Tibial artery (tissue), 4 donors: ENCODE measurements at regions of chr19 and their contacts with region 1.

Region 1: GRCh38 chr19:35628565-35629331 is at the start of gene RBM42:
- DNase-seq: peak; percentile 98
- H3K4me3 ChIP-seq: peak within 1 kb of the TSS; percentile 93 to 100
- H3K27ac ChIP-seq: peak within 1 kb of the TSS; percentile 89 to 91
- H3K4me1 ChIP-seq: peaks cover 3 to 26% (median 18%) of the 10 kb centered on the region in 4 donors
- H3K27me3 ChIP-seq: no peaks in the 10 kb centered on the region
- CTCF ChIP-seq: peak in 1 of 2 experiments; percentile 22

Region 2: GRCh38 chr19:35545001-35545911 is 83.5 kb before region 1 on chr19 and contains the start of gene TMEM147:
- intact Hi-C with region 1: loop called (anchors 5 kb)
- DNase-seq: peak; percentile 92 to 96
- H3K4me3 ChIP-seq: peak within 1 kb of the TSS; percentile 79
- H3K27ac ChIP-seq: peak within 1 kb of the TSS; percentile 87 to 89
- H3K4me1 ChIP-seq: peaks cover 7 to 32% (median 20%) of the 10 kb centered on the region in 4 donors
- H3K27me3 ChIP-seq: no peaks in the 10 kb centered on the region
- CTCF ChIP-seq: no peak

Region 3: GRCh38 chr19:35557539-35558399 is 71.0 kb before region 1 on chr19:
- intact Hi-C with region 1: no loop called
- DNase-seq: no peak
- H3K4me3 ChIP-seq: peak overlapping the region in 1 of 2 donors; percentile 31
- H3K27ac ChIP-seq: no peak overlapping the region
- H3K4me1 ChIP-seq: peaks cover 0 to 12% (median 9%) of the 10 kb centered on the region in 4 donors
- H3K27me3 ChIP-seq: peaks cover 0 to 54% of the 10 kb centered on the region in 2 donors
- CTCF ChIP-seq: no peak

Region 4: GRCh38 chr19:35612559-35613321 is 16.0 kb before region 1 on chr19 and contains the start of gene HAUS5:
- intact Hi-C with region 1: loop called (anchors 2 kb)
- DNase-seq: peak; percentile 95
- H3K4me3 ChIP-seq: peak within 1 kb of the TSS; percentile 68 to 93
- H3K27ac ChIP-seq: peak within 1 kb of the TSS; percentile 76
- H3K4me1 ChIP-seq: peaks cover 0 to 16% (median 11%) of the 10 kb centered on the region in 4 donors
- H3K27me3 ChIP-seq: no peaks in the 10 kb centered on the region
- CTCF ChIP-seq: peak in 1 of 2 experiments; percentile 25

Region 5: DNA sequence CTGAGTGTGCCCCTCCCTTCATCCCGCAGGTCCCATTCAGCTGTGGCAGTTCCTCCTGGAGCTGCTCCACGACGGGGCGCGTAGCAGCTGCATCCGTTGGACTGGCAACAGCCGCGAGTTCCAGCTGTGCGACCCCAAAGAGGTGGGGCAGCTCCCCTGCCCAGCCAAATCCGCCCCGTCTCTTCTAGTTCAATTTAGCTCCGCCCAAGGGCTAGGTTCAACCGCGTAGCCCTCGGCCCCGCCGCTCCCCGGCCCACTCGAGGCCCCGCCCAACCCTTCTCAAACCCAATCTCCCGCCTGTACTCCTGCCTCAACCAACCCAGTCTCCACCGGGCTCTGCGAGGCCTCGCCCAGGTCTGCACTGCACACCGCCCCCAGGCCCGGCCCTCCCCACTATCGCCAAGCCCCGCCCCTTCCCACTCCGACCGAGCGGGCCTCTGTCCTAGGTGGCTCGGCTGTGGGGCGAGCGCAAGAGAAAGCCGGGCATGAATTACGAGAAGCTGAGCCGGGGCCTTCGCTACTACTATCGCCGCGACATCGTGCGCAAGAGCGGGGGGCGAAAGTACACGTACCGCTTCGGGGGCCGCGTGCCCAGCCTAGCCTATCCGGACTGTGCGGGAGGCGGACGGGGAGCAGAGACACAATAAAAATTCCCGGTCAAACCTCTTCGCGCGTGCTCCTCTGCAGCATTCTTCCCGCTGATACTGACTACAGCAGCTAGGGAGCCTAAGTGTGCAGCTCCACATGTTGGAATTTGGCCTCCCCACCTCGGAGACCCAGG is 15.6 kb after region 1 on chr19:
- intact Hi-C with region 1: loop called (anchors 2 kb)
- DNase-seq: peak; percentile 96 to 98
- H3K4me3 ChIP-seq: peak overlapping the region; percentile 59 to 73
- H3K27ac ChIP-seq: peak overlapping the region; percentile 72 to 93
- H3K4me1 ChIP-seq: peaks cover 4 to 43% (median 32%) of the 10 kb centered on the region in 4 donors
- H3K27me3 ChIP-seq: no peaks in the 10 kb centered on the region
- CTCF ChIP-seq: no peak

Region 6: DNA sequence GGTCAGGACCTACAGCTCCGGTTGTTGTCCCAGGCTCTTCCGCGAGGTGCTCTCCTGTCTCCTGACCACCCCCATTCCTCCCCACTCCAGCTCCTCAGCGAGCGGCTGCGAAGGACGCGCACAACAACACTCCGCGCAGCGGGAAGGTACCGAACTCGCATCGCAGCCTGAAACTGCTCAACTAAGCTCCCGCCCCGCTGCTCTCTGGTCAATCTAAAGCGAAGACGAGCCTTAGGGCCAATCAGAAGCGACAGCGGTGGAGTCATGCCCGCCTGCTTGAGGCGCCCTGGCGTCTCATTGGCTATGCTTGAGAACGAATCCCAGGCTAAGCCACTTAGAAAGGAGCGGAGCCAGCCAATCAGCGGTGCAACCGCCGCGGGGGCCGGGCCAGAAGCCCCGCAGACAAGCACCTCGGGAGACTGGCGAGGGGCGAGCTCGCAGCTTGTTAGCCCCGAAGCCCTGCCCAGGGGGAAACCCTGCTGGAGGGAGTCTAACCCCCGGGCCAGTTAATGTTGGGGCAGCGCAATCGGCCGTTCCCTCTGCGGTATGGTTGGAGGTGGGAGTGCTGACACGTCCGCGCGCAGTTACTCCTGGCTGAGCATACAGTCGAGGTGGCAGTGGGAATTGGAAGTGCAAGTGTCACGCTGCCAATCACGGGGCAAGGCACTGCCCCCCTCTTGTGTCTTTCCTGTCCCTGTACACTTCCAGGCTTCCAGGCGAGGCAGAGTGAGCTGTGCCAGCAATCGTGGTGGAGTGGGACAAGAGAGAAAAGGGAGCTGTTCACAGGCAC is 73.7 kb after region 1 on chr19:
- intact Hi-C with region 1: no loop called
- DNase-seq: peak; percentile 94 to 95
- H3K4me3 ChIP-seq: peak overlapping the region; percentile 55 to 59
- H3K27ac ChIP-seq: peak overlapping the region in 1 of 2 donors; percentile 25
- H3K4me1 ChIP-seq: peaks cover 0 to 15% (median 11%) of the 10 kb centered on the region in 4 donors
- H3K27me3 ChIP-seq: peaks cover 0 to 13% of the 10 kb centered on the region in 2 donors
- CTCF ChIP-seq: peak in 1 of 2 experiments; percentile 9